ENCODE measurements at regions of chr1 and their contacts with region 1.

Region 1: GRCh38 chr1:185238447-185238846 is 78.6 kb downstream of the IVNS1ABP start:
- DNase-seq: peak; percentile 24
- H3K4me3 Mint-ChIP-seq: no peak overlapping the region
- H3K27ac Mint-ChIP-seq: no peak overlapping the region
- H3K4me1 Mint-ChIP-seq: no peaks in the 10 kb centered on the region
- H3K27me3 Mint-ChIP-seq: no peaks in the 10 kb centered on the region
- CTCF ChIP-seq: peak; percentile 25

Region 2: GRCh38 chr1:184866991-184867788 is 371.3 kb before region 1 on chr1:
- CTCF ChIA-PET with region 1: no interaction called
- POLR2A ChIA-PET with region 1: no interaction called
- intact Hi-C with region 1: no loop called
- DNase-seq: peak; percentile 98
- H3K4me3 Mint-ChIP-seq: no peak overlapping the region
- H3K27ac Mint-ChIP-seq: no peak overlapping the region
- H3K4me1 Mint-ChIP-seq: peaks cover 8% of the 10 kb centered on the region
- H3K27me3 Mint-ChIP-seq: peaks cover 100% of the 10 kb centered on the region
- CTCF ChIP-seq: no peak

Region 3: DNA sequence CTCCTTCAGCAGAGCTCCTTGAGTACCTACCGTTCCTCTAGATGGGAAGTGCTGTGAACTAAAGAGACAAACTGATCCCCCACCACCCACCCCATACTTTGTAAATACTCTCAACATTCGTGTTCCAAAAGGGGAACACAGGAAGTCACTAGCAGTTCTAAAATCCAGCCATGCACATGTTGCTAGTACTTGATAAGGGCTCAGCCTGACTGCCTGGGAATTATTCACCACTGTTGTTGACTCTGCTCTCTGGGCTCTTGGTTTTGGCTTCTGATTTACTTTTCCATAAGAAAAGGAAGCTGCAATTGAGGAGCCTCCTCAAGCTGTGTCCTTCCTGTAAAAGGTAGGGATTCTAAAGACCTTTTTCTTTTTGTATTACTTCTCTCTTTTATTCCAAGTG is 11.1 kb after region 1 on chr1:
- CTCF ChIA-PET with region 1: interaction called, 20 read pairs
- POLR2A ChIA-PET with region 1: interaction called, 4 read pairs
- intact Hi-C with region 1: no loop called
- DNase-seq: no peak
- H3K4me3 Mint-ChIP-seq: no peak overlapping the region
- H3K27ac Mint-ChIP-seq: no peak overlapping the region
- H3K4me1 Mint-ChIP-seq: peaks cover 2% of the 10 kb centered on the region
- H3K27me3 Mint-ChIP-seq: no peaks in the 10 kb centered on the region
- CTCF ChIP-seq: no peak

Measured in MCF 10A (cell line).